GM18951 (cell line): ENCODE measurements at regions of chr17 and their contacts with region 1.

Region 1: GRCh38 chr17:36601303-36602029 is at the start of gene MRM1:
- POLR2A ChIP-seq: peak; percentile 94

Region 2: DNA sequence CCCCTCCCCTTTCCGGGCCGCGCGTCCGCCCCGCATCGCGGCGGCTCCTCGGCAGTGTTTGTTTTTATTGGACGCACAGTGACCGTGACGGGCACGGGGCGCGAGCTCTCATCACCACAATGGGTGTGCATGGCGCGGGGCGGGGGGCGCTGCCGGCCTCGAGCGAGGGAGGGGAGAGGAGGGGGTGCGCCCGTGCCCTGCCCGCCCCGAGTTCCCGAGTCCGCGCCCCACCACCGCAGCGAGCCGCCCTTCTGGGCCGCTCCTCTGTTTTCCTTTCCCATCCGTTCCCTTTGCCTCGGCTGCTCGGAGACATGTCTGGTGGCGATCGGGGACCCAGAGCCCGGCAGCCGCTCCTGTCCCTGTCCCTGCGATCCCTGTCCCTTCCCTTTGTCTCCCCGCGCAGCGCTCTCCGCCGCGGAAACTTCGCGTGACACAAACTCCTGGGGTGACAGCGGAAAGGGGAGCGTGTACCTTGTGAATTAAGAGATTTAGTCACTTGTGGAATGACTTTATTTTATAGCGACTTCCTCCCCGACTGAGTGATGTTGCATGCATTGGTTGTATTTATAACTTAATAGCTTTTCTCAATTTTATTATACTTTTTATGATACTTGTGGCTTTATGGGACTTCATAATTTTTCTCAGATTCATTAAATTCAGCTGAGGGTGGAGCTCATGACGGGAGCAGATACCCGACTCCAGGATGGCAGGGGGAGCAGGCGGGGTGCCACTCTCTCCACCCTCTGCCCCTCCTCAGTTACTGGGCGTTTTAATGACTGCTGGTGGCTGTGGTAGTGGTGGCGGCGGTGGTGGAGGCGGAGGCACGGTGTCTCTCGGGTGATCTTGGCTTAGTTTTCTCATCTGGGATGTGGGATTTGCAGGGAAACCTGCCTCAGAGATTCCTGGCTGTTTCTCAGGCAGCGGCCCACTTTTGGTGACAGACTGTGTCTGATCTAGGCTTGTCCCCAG is 40.7 kb after region 1 on chr17:
- in situ Hi-C with region 1: no loop called
- POLR2A ChIP-seq: no peak

Region 3: DNA sequence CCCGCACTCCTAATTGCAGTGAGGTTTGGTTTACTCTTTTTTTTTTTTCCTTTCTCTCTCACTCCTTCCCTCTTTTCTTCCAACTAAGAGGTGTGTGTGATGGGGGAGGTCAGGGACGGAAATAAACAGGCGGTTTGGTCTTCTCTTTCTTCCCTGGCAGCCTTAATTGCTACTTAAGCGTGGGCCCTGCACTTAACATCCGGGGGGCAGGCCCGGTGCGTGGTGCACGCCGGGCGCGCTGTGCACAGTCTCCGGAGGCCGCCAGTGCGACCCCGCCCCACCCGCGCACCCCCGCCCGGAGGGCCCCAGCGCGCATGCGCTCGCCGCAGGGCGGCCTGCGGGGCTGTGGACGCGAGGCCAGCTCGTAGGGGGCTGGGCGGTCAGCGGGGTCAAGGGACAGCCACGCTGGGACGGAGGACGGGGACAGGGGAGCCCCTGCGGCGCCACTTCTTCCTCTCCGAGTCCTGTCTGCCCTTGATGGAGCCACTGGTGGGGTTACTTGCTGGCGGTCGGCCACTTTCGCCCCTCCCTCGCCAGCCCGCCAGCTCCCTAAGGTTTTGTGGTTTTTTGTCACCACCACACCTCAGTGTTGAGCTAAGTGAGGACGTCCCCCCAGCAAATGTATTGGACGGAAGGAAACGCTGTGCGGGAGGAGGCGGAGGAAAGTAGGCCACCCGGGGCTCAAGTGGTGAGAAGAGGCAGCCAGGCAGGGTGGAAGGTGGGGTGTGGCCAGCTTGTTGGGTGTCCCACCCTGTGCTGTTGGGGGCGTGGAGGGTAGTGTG is 120.8 kb after region 1 on chr17:
- in situ Hi-C with region 1: no loop called
- POLR2A ChIP-seq: peak; percentile 41

Region 4: DNA sequence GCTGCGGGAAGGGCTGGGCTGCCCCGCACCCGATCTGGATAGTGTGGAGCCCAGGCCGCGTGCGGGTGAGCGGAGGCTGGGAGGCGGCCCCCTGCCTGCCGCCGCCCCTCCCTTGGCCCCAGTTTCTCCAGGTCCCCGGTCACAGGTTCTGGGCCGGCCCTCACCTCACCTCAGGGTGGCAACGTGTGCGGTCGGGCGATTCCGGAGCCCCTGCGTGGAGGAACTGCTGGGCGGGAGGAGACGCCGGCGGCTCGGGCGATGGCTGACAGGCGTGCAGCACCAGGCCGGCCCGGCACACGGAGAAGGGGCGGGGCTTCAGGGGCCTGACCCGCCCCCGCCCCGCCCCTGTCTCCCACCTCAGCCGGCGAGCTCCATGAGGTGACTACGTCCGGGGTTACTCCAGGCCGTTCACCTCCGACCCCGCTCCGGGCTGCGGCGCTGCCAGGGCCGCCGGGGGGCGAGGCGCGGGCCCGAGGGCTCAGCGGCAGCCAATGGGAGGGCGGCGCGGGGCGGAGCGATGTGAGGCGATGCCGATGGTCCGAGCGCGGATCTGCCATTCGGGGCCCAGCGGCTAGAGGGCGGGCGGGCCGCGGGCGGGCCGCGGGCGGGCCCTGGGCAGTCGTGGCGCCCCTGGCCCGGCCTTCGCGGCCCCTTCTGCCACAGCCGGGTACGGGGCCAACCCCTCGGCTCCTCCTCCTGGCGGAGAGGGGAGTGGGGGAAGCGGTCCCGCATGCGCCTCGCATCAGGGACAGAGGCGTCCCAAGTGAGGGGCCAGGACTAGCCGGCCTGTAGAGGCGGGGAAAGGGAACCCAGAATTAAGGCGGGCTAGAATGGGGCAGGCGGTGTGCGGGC is 757.6 kb after region 1 on chr17:
- in situ Hi-C with region 1: loop called (anchors 25 kb)
- POLR2A ChIP-seq: peak; percentile 66